H1 (cell line): ENCODE measurements at regions of chr16 and their contacts with region 1.

Region 1: GRCh38 chr16:67530013-67530939 is 1.6 kb downstream of the RIPOR1 start:
- DNase-seq: peak in 1 of 2 experiments; percentile 69
- H3K4me3 ChIP-seq: peak overlapping the region; percentile 32 to 68 (median 48)
- H3K27ac ChIP-seq: no peak overlapping the region
- H3K4me1 ChIP-seq: peaks cover 0 to 12% (median 8%) of the 10 kb centered on the region in 4 experiments; a peak in 6 of 7 replicates
- H3K27me3 ChIP-seq: peaks cover 60 to 98% (median 91%) of the 10 kb centered on the region in 4 experiments
- CTCF ChIP-seq: no peak
- EP300 ChIP-seq: no peak
- POLR2A ChIP-seq: no peak
- RAD21 ChIP-seq: no peak

Region 2: DNA sequence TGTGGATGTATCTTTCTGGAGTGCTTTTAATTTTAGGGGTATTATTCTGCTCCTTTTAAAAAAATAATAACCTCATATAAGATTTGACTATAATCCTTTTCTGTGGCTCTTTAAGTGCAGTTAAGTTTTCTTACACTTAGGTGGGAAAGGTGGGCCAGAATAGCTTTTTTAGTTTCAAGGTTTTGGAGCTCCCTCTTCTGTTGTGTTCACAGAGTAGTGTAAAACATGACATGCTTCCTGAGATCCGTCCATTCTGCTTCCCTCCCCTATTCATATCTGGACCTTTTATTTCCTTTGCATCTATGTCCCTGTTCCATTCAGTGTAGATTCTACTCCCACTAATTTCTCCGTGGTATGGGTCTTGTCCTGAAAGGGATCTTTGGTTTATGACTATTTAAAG is 190.8 kb before region 1 on chr16:
- CTCF ChIA-PET with region 1: no interaction called
- POLR2A ChIA-PET with region 1: no interaction called
- DNase-seq: no peak
- H3K4me3 ChIP-seq: no peak overlapping the region
- H3K27ac ChIP-seq: no peak overlapping the region
- H3K4me1 ChIP-seq: no peaks in the 10 kb centered on the region
- H3K27me3 ChIP-seq: no peaks in the 10 kb centered on the region
- CTCF ChIP-seq: no peak
- EP300 ChIP-seq: no peak
- POLR2A ChIP-seq: no peak
- RAD21 ChIP-seq: peak; percentile 42 to 52

Region 3: GRCh38 chr16:67514382-67514828 is 15.9 kb before region 1 on chr16:
- CTCF ChIA-PET with region 1: interaction called, 80 read pairs
- POLR2A ChIA-PET with region 1: interaction called, 3 read pairs
- DNase-seq: peak in 1 of 2 experiments; percentile 69
- H3K4me3 ChIP-seq: no peak overlapping the region
- H3K27ac ChIP-seq: no peak overlapping the region
- H3K4me1 ChIP-seq: no peaks in the 10 kb centered on the region
- H3K27me3 ChIP-seq: peaks cover 0 to 11% (median 5%) of the 10 kb centered on the region in 4 experiments; a peak in 2 of 7 replicates
- CTCF ChIP-seq: peak; percentile 38 to 77 (median 69)
- EP300 ChIP-seq: no peak
- POLR2A ChIP-seq: no peak
- RAD21 ChIP-seq: peak; percentile 55 to 65

Region 4: DNA sequence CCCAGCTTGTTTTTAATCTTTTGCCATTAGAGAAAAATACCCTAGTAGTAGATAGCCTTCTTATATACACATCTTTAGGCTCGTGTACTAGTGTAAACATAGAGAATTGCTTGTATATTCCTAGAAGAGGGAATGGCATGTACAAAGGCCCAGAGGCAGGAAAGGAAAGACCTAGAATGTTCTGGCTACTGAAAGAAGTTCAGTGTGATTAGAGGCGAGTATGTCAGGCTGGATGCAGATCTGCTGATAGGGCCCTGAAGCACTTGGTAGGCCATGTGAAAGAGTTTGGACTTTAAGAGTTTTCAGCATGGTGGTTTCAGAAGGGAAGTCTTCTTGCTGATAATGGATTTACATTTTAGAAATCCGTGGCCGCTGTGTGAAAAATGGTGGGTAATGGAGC is 49.4 kb after region 1 on chr16:
- CTCF ChIA-PET with region 1: no interaction called
- POLR2A ChIA-PET with region 1: no interaction called
- DNase-seq: no peak
- H3K4me3 ChIP-seq: no peak overlapping the region
- H3K27ac ChIP-seq: no peak overlapping the region
- H3K4me1 ChIP-seq: no peaks in the 10 kb centered on the region
- H3K27me3 ChIP-seq: no peaks in the 10 kb centered on the region
- CTCF ChIP-seq: no peak
- EP300 ChIP-seq: no peak
- POLR2A ChIP-seq: no peak
- RAD21 ChIP-seq: no peak

Region 5: DNA sequence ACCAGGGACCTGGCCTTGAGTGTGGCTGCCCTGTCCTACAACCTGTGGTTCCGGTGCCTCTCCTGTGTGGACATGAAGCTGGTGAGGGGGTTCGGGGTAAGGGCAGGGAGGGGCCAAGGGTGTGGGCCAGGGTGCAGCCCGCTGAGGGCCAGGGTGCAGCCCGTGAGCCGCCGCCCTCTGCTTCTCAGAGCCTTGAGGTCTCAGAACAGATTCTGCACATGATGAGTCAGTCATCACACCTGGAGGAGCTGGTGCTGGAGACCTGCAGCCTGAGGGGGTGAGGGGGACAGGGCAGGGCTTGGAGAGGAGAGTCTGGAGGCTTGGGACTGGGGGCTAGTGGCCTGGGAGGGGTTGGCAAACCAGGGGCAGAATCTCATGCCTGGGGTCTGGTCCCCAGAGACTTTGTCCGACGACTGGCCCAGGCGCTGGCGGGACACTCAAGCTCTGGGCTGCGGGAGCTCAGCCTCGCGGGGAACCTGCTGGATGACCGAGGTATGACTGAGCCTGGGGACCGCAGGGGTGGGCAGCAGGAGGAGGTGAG is 116.9 kb after region 1 on chr16:
- CTCF ChIA-PET with region 1: interaction called, 18 read pairs
- POLR2A ChIA-PET with region 1: interaction called, 10 read pairs
- DNase-seq: no peak
- H3K4me3 ChIP-seq: no peak overlapping the region
- H3K27ac ChIP-seq: no peak overlapping the region
- H3K4me1 ChIP-seq: peaks cover 0 to 16% (median 6%) of the 10 kb centered on the region in 4 experiments; a peak in 5 of 7 replicates
- H3K27me3 ChIP-seq: peaks cover 3 to 33% (median 19%) of the 10 kb centered on the region in 4 experiments; a peak in 6 of 7 replicates
- CTCF ChIP-seq: no peak
- EP300 ChIP-seq: no peak
- POLR2A ChIP-seq: no peak
- RAD21 ChIP-seq: no peak

Region 6: GRCh38 chr16:67750466-67750865 is 220.2 kb after region 1 on chr16:
- CTCF ChIA-PET with region 1: no interaction called
- POLR2A ChIA-PET with region 1: no interaction called
- DNase-seq: no peak
- H3K4me3 ChIP-seq: no peak overlapping the region
- H3K27ac ChIP-seq: no peak overlapping the region
- H3K4me1 ChIP-seq: no peaks in the 10 kb centered on the region
- H3K27me3 ChIP-seq: no peaks in the 10 kb centered on the region
- CTCF ChIP-seq: no peak
- EP300 ChIP-seq: no peak
- POLR2A ChIP-seq: no peak
- RAD21 ChIP-seq: no peak